ENCODE measurements at regions of chr10 and their contacts with region 1.

Region 1: DNA sequence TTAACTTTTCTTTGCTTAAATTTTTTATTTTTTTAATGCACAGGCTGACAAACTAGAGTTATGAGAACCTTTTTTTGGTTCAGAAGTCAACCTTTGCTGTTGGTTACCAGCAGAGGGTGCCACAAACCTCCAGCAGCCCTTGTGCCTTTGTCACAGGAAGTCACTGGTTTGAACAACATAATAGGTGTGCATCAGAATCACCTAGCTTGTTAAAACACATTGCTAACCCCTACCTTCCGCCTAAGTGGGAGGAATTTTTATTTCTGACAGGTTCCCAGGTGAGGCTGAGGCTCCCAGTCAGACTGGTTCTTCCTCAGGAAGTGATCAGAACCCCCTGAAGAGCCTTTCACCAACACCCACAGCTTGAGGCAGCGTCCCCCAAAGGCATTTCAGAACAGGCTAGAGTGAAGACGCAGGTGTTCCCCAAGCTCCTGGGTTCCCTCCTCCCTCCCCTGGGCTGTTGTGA is 22.6 kb upstream of the VDAC2 start:
- DNase-seq: peak; percentile 77
- ATAC-seq: peak; percentile 73
- H3K4me3 ChIP-seq: no peak overlapping the region
- H3K4me3 Mint-ChIP-seq: no peak overlapping the region
- H3K27ac ChIP-seq: peak overlapping the region in 1 of 2 donors; percentile 11
- H3K27ac Mint-ChIP-seq: peak overlapping the region; percentile 41
- H3K4me1 ChIP-seq: peaks cover 3% of the 10 kb centered on the region in 2 donors
- H3K4me1 Mint-ChIP-seq: no peaks in the 10 kb centered on the region
- H3K27me3 ChIP-seq: no peaks in the 10 kb centered on the region
- H3K27me3 Mint-ChIP-seq: no peaks in the 10 kb centered on the region
- CTCF ChIP-seq: peak; percentile 79

Region 2: DNA sequence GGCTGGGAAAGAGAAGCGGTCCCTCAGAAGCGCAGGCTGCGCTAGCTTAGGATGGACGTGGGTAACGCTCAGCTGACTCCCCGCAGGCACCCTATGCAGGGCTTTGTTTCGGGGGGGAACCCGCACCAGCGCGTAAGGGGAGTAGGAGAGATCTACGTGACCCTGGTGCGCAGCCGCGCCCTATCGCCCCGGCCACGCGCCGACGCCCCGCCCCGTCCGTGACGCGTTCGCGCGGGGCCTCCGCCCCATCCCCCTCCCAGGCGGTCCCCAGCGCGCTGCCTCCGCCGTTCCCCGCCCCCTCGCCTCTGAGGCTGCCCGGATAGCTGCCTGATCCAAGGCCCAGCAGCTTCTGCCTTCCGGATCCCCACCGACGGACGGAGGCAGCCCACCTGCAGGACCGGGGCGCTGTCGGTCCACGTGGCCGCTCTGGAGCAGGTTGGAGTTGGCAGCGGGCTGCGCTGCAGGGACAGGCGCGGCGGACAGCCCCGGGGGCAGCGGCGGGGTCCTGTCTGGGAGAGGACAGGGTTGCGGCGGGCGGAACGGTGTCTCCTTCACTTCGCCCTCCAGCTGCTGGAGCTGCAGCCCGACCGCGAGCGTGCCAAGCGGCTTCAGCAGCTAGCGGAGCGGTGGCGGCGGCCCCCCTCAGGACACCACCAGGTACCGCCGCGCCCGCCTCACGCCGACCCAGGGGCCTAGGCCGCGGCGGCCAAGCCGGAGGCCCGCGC is 22.4 kb after region 1 on chr10 and contains the start of gene VDAC2:
- CTCF ChIA-PET with region 1: interaction called, 21 read pairs
- POLR2A ChIA-PET with region 1: interaction called, 6 read pairs
- intact Hi-C with region 1: loop called (anchors 1 kb)
- DNase-seq: peak; percentile 99
- ATAC-seq: peak; percentile 89
- H3K4me3 ChIP-seq: peak within 1 kb of the TSS; percentile 84 to 98 (median 93)
- H3K4me3 Mint-ChIP-seq: peak within 1 kb of the TSS; percentile 95
- H3K27ac ChIP-seq: peak within 1 kb of the TSS; percentile 97 to 100
- H3K27ac Mint-ChIP-seq: peak within 1 kb of the TSS; percentile 98
- H3K4me1 ChIP-seq: peaks cover 12 to 20% of the 10 kb centered on the region in 2 donors
- H3K4me1 Mint-ChIP-seq: peaks cover 24% of the 10 kb centered on the region
- H3K27me3 ChIP-seq: no peaks in the 10 kb centered on the region
- H3K27me3 Mint-ChIP-seq: no peaks in the 10 kb centered on the region
- CTCF ChIP-seq: no peak
- total RNA-seq, gene VDAC2: 83.6 and 86.4 TPM in 2 replicates

Region 3: GRCh38 chr10:75226656-75227055 is 38.7 kb after region 1 on chr10:
- CTCF ChIA-PET with region 1: interaction called, 138 read pairs
- POLR2A ChIA-PET with region 1: interaction called, 5 read pairs
- intact Hi-C with region 1: loop called (anchors 1 kb)
- DNase-seq: no peak
- ATAC-seq: no peak
- H3K4me3 ChIP-seq: no peak overlapping the region
- H3K4me3 Mint-ChIP-seq: no peak overlapping the region
- H3K27ac ChIP-seq: peak overlapping the region in 1 of 2 donors; percentile 65
- H3K27ac Mint-ChIP-seq: peak overlapping the region; percentile 73
- H3K4me1 ChIP-seq: peaks cover 0 to 11% of the 10 kb centered on the region in 2 donors
- H3K4me1 Mint-ChIP-seq: peaks cover 39% of the 10 kb centered on the region
- H3K27me3 ChIP-seq: no peaks in the 10 kb centered on the region
- H3K27me3 Mint-ChIP-seq: no peaks in the 10 kb centered on the region
- CTCF ChIP-seq: no peak

Region 4: GRCh38 chr10:75682649-75683557 is 494.9 kb after region 1 on chr10:
- CTCF ChIA-PET with region 1: no interaction called
- POLR2A ChIA-PET with region 1: no interaction called
- intact Hi-C with region 1: no loop called
- DNase-seq: no peak
- ATAC-seq: no peak
- H3K4me3 ChIP-seq: no peak overlapping the region
- H3K4me3 Mint-ChIP-seq: no peak overlapping the region
- H3K27ac ChIP-seq: no peak overlapping the region
- H3K27ac Mint-ChIP-seq: no peak overlapping the region
- H3K4me1 ChIP-seq: no peaks in the 10 kb centered on the region
- H3K4me1 Mint-ChIP-seq: no peaks in the 10 kb centered on the region
- H3K27me3 ChIP-seq: peaks cover 0 to 3% (median 0%) of the 10 kb centered on the region in 4 experiments
- H3K27me3 Mint-ChIP-seq: peaks cover 13% of the 10 kb centered on the region
- CTCF ChIP-seq: no peak